HepG2 (cell line): ENCODE measurements at regions of chr4 and their contacts with region 1.

Region 1: DNA sequence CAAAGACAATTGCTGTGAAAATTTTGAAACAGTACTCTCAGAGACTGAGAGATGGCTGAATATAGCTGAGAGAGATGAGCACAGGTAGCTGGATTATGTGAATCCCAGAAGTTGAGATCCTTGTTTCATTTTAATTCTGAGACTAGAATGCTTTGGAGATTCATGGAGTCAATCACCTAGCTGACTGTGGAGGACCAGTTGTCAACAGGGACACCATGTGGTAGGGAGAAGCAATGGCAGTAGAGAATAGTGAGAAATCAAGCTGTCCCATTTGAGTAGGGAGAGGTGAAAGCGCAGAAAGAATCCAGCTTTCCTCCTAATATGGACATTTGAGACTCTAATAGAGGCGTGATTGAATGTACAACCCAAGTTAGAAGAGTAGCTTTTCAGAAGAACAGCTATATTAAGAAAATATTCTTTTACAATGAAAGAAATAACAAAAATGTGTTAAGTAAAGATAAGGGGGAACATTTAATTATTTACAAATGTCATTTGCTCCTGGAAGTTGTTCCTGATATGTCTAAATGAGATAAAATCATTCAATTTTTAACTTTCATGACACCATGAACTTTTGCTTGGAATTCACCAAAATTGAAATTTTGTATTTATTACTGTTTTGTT is 30.3 kb upstream of the GLRB start:
- DNase-seq: peak; percentile 47
- ATAC-seq: peak; percentile 96
- H3K4me3 ChIP-seq: no peak overlapping the region
- H3K27ac ChIP-seq: no peak overlapping the region
- H3K4me1 ChIP-seq: no peaks in the 10 kb centered on the region
- H3K27me3 ChIP-seq: 0 out of 5 replicates have a peak, but pooled peaks cover 0 to 3% of the 10 kb centered on the region in 2 experiments
- CTCF ChIP-seq: peak; percentile 83
- EP300 ChIP-seq: no peak
- POLR2A ChIP-seq: no peak
- RAD21 ChIP-seq: peak; percentile 53; the same call in 1 of the 2 replicates

Region 2: DNA sequence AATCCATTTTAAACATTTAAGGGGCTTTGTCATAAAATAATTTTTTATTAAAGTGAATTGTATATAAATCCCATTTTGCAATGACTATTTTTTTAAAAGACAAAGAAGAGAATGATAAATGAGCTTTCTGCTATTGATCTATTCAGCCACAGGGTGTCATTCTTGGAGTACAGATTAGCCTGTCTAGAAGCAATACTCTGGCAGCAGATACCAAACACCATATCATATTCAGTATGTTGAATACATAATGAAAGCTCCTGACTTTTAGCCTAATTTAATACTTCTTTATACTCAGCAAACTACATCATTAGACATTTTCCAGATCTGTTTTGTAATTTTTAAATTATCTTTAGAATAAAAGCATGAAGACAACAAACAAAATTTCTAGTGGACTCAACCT is 570.3 kb before region 1 on chr4:
- CTCF ChIA-PET with region 1: interaction called, 19 read pairs
- POLR2A ChIA-PET with region 1: no interaction called
- in situ Hi-C with region 1: loop called (anchors 5 kb)
- intact Hi-C with region 1: loop called (anchors 1 kb)
- DNase-seq: peak; percentile 15
- ATAC-seq: peak; percentile 75
- H3K4me3 ChIP-seq: no peak overlapping the region
- H3K27ac ChIP-seq: no peak overlapping the region
- H3K4me1 ChIP-seq: no peaks in the 10 kb centered on the region
- H3K27me3 ChIP-seq: no peaks in the 10 kb centered on the region
- CTCF ChIP-seq: peak; percentile 51
- EP300 ChIP-seq: no peak
- POLR2A ChIP-seq: no peak
- RAD21 ChIP-seq: no peak

Region 3: DNA sequence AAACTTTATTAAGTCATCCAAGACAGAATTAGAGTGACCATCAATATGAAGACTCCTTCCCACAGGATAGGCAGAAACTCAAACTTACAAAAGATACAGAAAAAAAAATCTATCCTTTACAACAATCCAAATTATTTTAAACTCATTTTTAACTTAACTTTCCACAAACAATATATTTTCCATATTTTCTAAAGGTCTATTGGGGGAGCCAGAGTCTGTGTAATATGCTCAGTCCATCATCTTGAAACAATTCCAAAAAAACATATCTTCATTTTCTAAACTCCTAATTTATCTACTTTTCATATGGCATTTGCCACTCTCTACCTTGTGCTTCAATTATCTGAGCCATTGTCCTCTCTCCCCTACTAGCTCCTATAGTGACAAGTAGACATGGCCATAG is 452.2 kb before region 1 on chr4:
- CTCF ChIA-PET with region 1: no interaction called
- POLR2A ChIA-PET with region 1: no interaction called
- in situ Hi-C with region 1: no loop called
- intact Hi-C with region 1: loop called (anchors 2 kb)
- DNase-seq: no peak
- ATAC-seq: no peak
- H3K4me3 ChIP-seq: no peak overlapping the region
- H3K27ac ChIP-seq: no peak overlapping the region
- H3K4me1 ChIP-seq: no peaks in the 10 kb centered on the region
- H3K27me3 ChIP-seq: no peaks in the 10 kb centered on the region
- CTCF ChIP-seq: no peak
- EP300 ChIP-seq: no peak
- POLR2A ChIP-seq: no peak
- RAD21 ChIP-seq: no peak

Region 4: GRCh38 chr4:156962528-156962974 is 83.1 kb before region 1 on chr4:
- CTCF ChIA-PET with region 1: no interaction called
- POLR2A ChIA-PET with region 1: no interaction called
- in situ Hi-C with region 1: no loop called
- intact Hi-C with region 1: no loop called
- DNase-seq: peak; percentile 66
- ATAC-seq: peak; percentile 90
- H3K4me3 ChIP-seq: no peak overlapping the region
- H3K27ac ChIP-seq: no peak overlapping the region
- H3K4me1 ChIP-seq: peaks cover 42% of the 10 kb centered on the region
- H3K27me3 ChIP-seq: no peaks in the 10 kb centered on the region
- CTCF ChIP-seq: no peak
- EP300 ChIP-seq: no peak
- POLR2A ChIP-seq: no peak
- RAD21 ChIP-seq: no peak

Region 5: DNA sequence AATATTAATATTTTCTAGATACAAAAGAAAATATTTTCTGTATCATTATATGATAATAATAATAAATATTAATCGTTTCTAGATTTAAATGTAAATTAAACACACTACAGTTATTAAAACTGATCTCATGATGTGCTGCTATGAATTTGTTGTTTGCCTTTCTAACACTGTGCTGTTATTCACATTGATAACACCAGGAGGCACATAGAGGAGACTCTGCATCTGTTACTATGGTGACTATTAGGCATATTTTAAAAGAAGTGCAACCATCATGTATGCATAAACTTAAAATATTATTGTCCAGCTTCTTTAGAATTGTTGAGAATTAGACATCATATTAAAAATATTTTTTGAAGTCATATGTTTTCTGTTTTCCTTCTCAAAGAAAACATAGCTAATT is 62.3 kb before region 1 on chr4:
- CTCF ChIA-PET with region 1: interaction called, 3 read pairs
- POLR2A ChIA-PET with region 1: no interaction called
- in situ Hi-C with region 1: no loop called
- intact Hi-C with region 1: loop called (anchors 2 kb)
- DNase-seq: no peak
- ATAC-seq: peak; percentile 50; the same call in 1 of the 3 replicates
- H3K4me3 ChIP-seq: no peak overlapping the region
- H3K27ac ChIP-seq: no peak overlapping the region
- H3K4me1 ChIP-seq: no peaks in the 10 kb centered on the region
- H3K27me3 ChIP-seq: no peaks in the 10 kb centered on the region
- CTCF ChIP-seq: no peak
- EP300 ChIP-seq: no peak
- POLR2A ChIP-seq: no peak
- RAD21 ChIP-seq: no peak